Right cardiac atrium (tissue), 5 donors: ENCODE measurements at regions of chr13 and their contacts with region 1.

Region 1: DNA sequence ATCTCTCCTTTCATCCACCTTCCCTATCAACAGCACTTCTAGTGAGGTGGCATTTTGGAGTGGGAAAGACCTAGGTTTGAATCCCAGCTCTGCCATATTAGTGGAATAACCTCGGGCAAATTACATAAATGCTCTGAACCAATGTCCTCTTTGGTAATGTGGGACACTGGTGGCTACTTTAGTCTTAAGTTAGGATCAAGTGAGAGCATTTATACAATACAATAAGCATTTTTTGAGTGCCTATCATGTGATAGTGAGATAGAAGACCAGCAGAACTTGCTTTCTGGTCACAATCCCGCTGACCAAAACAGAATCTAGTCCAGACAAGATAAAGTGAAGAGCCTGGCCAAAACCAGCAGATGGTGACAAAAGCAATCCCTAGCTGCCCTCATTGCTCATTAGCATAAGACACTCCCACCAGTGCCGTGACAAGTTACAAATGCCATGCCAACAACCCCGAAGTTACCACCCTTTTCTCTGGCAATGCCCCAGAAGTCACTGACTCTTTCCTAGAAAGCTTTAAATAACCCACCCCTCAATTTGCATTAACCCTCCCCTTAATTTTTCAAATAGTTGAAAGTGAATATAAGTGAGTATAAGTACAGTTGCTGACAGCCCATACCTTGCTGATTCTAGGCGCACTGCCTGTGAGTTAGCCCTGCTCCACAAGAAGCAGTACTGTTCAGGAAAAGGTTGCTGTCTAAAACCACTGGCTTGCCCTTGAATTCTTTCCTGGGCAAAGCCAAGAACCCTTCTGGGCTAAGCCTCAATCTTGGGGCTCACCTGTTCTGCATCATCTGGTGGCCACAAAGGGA is 28.9 kb upstream of the KPNA3 start:
- DNase-seq: no peak
- ATAC-seq: no peak
- H3K4me3 ChIP-seq: no peak overlapping the region
- H3K27ac ChIP-seq: no peak overlapping the region
- H3K4me1 ChIP-seq: no peaks in the 10 kb centered on the region
- H3K27me3 ChIP-seq: no peaks in the 10 kb centered on the region

Region 2: GRCh38 chr13:49807681-49808080 is 13.7 kb before region 1 on chr13:
- intact Hi-C with region 1: loop called in 1 of 4 experiments (anchors 2 kb)
- DNase-seq: no peak
- ATAC-seq: no peak
- H3K4me3 ChIP-seq: no peak overlapping the region
- H3K27ac ChIP-seq: no peak overlapping the region
- H3K4me1 ChIP-seq: peaks cover 3% of the 10 kb centered on the region
- H3K27me3 ChIP-seq: no peaks in the 10 kb centered on the region

Region 3: DNA sequence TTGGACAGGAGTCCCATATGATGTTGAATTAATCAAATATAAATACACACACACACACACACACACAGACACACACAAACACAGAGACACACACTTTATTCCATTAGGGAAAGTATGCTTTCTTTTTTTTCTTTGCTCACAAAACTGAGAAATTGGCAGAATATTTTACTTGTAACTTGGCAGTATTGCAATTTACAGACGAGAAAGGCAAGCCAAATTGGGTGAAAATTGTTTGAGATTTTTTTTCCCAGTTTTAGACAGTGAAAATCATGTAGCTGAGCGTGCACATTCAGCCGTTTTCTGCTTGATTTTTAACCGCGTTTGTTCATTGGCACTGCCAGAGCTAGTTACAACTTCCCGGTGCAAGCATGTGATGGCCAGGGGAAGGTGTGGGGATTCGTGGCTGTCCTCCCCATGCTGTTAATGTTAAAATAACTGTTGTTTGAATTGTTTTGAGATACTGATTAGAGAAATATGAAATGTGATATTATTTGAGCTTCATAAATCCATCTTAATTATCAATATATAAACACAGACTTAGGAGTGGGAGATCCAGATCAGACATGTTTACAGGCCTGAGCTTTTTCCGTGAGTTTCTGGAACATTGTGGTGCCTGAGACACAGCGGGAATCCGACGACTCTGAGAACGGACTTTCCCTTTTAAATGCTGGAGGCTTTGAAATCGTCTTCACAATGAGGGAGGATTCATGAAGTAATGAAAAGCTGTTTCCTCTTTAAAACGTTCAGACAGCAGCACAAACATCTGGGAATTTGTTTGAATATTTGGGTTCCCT is 319.4 kb after region 1 on chr13:
- intact Hi-C with region 1: no loop called
- DNase-seq: no peak
- ATAC-seq: no peak
- H3K4me3 ChIP-seq: no peak overlapping the region
- H3K27ac ChIP-seq: no peak overlapping the region
- H3K4me1 ChIP-seq: no peaks in the 10 kb centered on the region
- H3K27me3 ChIP-seq: no peaks in the 10 kb centered on the region